ENCODE measurements at regions of chrX and their contacts with region 1.

Region 1: DNA sequence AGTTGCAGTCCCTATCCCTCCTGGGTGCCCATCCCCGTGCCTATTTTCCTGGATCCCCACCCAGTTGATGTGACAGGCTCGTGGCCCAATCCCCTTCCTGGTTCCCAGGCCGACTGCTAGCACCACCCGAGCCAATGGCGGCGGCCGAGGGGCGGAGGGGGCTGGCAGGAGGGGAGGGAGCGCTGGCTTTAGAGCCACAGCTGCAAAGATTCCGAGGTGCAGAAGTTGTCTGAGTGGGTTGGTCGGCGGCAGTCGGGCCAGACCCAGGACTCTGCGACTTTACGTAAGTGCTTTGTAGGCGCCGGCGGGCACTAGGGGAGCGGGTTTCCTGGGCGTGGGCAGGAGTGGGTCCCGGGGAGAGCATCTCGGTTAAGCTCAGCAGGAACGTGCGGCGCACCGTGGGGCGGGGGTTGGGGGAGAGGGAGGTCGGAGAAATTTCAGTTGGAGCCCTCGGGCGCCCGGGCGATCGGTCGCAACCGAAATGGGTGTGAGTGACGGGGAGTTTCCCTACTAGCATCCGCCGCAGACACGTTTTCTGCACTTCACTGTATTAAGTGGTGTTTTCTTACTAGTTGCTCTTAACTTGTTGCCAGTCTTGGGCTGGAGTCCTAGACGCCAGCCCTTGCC is at the start of gene PLS3:
- DNase-seq: peak; percentile 83 to 89 (median 88)
- H3K4me3 ChIP-seq: peak within 1 kb of the TSS; percentile 53
- H3K27ac ChIP-seq: peak within 1 kb of the TSS; percentile 81 to 83
- H3K4me1 ChIP-seq: no peaks in the 10 kb centered on the region
- H3K27me3 ChIP-seq: no peaks in the 10 kb centered on the region
- CTCF ChIP-seq: no peak
- EP300 ChIP-seq: no peak
- POLR2A ChIP-seq: peak; percentile 51
- total RNA-seq, gene PLS3: 60.9 to 152 (median 111) TPM

Region 2: DNA sequence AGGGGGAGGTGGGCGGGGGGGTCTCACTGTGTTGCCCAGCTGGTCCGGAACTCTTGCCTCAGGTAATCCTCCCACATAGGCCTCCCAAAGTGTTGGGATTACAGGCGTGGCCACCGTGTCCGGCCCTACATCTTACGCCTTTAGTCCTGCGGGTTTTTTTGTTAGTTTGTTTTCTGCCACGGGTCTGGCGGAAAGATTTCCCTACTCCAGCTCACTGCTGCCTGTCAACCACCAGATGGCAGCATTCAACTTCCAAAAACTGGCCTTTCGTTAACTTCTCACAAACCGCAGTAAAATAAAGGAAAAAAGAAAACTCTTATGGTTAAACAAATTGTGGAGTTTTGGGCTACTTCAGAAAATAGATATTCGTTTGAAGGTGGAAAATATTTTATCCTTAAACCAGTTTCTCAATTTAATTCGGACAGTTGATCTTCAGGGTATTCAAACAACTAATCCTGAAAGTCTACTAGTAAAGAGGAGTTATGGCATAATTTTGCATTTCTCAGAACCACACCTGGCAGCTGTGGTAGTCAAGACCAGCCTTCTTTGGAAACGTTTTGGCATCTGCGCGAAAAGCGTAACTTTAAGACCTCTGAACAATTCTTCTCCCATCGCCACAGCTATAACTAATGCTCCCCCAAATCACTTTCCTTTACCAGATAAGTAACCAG is 230.5 kb before region 1 on chrX:
- intact Hi-C with region 1: loop called in 1 of 4 experiments (anchors 5 kb)
- DNase-seq: peak; percentile 39 to 63 (median 51)
- H3K4me3 ChIP-seq: no peak overlapping the region
- H3K27ac ChIP-seq: no peak overlapping the region
- H3K4me1 ChIP-seq: no peaks in the 10 kb centered on the region
- H3K27me3 ChIP-seq: no peaks in the 10 kb centered on the region
- CTCF ChIP-seq: peak; percentile 70 to 76 (median 75)
- EP300 ChIP-seq: no peak
- POLR2A ChIP-seq: no peak

Region 3: GRCh38 chrX:115344885-115345614 is 216.0 kb before region 1 on chrX:
- intact Hi-C with region 1: loop called in 1 of 4 experiments (anchors 10 kb)
- DNase-seq: peak; percentile 85 to 94 (median 90)
- H3K4me3 ChIP-seq: no peak overlapping the region
- H3K27ac ChIP-seq: peak overlapping the region; percentile 41 to 65
- H3K4me1 ChIP-seq: peaks cover 5% of the 10 kb centered on the region
- H3K27me3 ChIP-seq: no peaks in the 10 kb centered on the region
- CTCF ChIP-seq: no peak
- EP300 ChIP-seq: peak; percentile 57
- POLR2A ChIP-seq: no peak

Region 4: DNA sequence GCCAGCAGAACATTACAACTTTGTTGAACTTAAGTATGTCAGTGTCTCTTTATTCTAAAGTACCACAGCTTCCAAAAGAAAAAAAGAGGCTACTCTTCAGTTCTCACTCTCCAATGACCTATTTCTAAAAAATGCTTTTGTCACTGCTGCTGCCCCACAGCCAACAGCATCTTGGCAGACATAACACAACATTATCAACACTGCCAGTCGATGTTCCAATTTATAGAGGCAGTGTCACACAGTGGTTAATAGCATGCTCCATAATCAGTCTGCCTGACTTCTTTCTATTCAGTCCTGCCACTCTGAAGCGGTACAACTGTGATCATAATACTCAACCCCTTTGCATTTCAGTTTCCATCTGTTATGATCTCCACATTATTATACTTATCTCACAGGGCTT is 69.1 kb after region 1 on chrX:
- intact Hi-C with region 1: loop called in 1 of 4 experiments (anchors 10 kb)
- DNase-seq: no peak
- H3K4me3 ChIP-seq: no peak overlapping the region
- H3K27ac ChIP-seq: no peak overlapping the region
- H3K4me1 ChIP-seq: peaks cover 1% of the 10 kb centered on the region
- H3K27me3 ChIP-seq: no peaks in the 10 kb centered on the region
- CTCF ChIP-seq: no peak
- EP300 ChIP-seq: no peak
- POLR2A ChIP-seq: no peak